ENCODE measurements at regions of chr1 and their contacts with region 1.

Region 1: DNA sequence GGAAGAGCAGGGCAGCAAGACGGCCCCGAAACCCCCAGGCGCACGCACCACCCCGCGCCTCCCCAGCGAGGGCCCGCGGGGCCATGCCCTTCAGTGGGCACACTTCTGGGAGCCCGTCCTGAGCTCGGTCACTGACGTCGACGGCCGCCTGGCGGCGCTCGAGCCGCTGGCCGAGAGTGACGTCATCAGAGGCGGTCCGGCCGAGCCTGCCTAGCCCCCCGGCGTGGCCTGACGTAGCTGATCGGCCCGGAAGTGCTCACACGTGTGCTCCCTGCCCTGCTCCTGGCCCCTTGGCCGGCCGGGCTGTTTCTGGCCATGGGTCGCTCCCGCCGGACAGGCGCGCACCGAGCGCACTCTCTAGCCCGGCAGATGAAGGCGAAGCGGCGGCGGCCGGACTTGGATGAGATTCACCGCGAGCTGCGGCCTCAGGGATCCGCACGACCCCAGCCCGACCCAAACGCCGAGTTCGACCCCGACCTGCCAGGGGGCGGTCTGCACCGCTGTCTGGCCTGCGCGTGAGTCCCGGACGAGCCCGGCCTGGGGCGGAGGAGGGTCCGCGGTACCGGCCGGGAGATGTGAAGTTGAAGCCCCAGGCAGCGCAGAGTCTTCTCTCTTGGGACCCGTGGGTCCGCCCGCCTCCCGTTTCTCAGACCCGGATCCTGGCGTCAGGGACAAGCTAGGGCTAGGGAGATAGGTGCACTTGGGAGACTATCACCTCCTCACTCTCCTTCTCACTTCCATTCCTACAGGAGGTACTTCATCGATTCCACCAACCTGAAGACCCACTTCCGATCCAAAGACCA is at the start of gene ZNF593:
- DNase-seq: peak; percentile 71 to 88 (median 81)
- H3K4me3 ChIP-seq: peak within 1 kb of the TSS; percentile 68
- H3K4me3 Mint-ChIP-seq: peak within 1 kb of the TSS; percentile 86 to 95 (median 88)
- H3K27ac ChIP-seq: peak within 1 kb of the TSS; percentile 86
- H3K27ac Mint-ChIP-seq: peak within 1 kb of the TSS; percentile 39 to 97 (median 85)
- H3K4me1 ChIP-seq: peaks cover 17% of the 10 kb centered on the region
- H3K4me1 Mint-ChIP-seq: peaks cover 12 to 25% (median 22%) of the 10 kb centered on the region in 3 donors
- H3K27me3 ChIP-seq: no peaks in the 10 kb centered on the region
- H3K27me3 Mint-ChIP-seq: peaks cover 0 to 2% of the 10 kb centered on the region in 2 donors
- total RNA-seq, gene ZNF593: 86.4 to 87.9 TPM

Region 2: GRCh38 chr1:25996966-25997827 is 172.7 kb before region 1 on chr1:
- CTCF ChIA-PET with region 1: no interaction called
- POLR2A ChIA-PET with region 1: no interaction called
- DNase-seq: peak in 1 of 5 donors; percentile 11
- H3K4me3 ChIP-seq: peak overlapping the region; percentile 84
- H3K4me3 Mint-ChIP-seq: peak overlapping the region; percentile 88 to 96 (median 94)
- H3K27ac ChIP-seq: peak overlapping the region; percentile 88
- H3K27ac Mint-ChIP-seq: peak overlapping the region; percentile 96 to 100 (median 99)
- H3K4me1 ChIP-seq: peaks cover 35% of the 10 kb centered on the region
- H3K4me1 Mint-ChIP-seq: peaks cover 42 to 52% (median 45%) of the 10 kb centered on the region in 3 donors
- H3K27me3 ChIP-seq: no peaks in the 10 kb centered on the region
- H3K27me3 Mint-ChIP-seq: peaks cover 0 to 3% of the 10 kb centered on the region in 2 donors

Region 3: DNA sequence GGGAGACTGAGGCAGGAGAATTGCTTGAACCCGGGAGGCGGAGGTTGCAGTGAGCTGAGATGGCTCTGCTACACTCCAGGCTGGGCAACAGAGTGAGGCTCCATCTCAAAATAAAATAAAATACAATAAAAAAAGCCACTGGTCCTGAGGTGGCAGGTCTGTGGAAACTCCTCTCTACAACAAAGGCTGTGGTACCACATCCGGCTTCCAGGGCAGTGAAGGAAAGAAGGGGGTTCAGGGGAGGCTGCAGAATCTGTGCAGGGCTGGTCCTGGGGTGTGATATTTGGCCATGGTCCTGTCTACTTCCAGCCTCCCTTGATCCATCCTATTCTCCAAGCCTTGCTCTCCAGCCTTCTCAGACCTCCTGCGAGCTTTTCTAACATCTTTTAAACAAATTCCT is 203.4 kb after region 1 on chr1:
- CTCF ChIA-PET with region 1: interaction called, 13 read pairs
- POLR2A ChIA-PET with region 1: no interaction called
- DNase-seq: peak; percentile 27 to 69 (median 51)
- H3K4me3 ChIP-seq: peak overlapping the region; percentile 3
- H3K4me3 Mint-ChIP-seq: peak overlapping the region; percentile 1 to 71 (median 55)
- H3K27ac ChIP-seq: no peak overlapping the region
- H3K27ac Mint-ChIP-seq: peak overlapping the region; percentile 48 to 93 (median 80)
- H3K4me1 ChIP-seq: peaks cover 90% of the 10 kb centered on the region
- H3K4me1 Mint-ChIP-seq: peaks cover 81 to 92% (median 90%) of the 10 kb centered on the region in 3 donors
- H3K27me3 ChIP-seq: no peaks in the 10 kb centered on the region
- H3K27me3 Mint-ChIP-seq: peaks cover 0 to 1% of the 10 kb centered on the region in 2 donors

Measured in CD8-positive, alpha-beta memory T cell (primary cell).